ENCODE measurements at regions of chr6 and their contacts with region 1.

Region 1: GRCh38 chr6:44074439-44075136 is 52.7 kb downstream of the MRPL14 start:
- H3K4me3 ChIP-seq: no peak overlapping the region
- H3K27ac ChIP-seq: peak overlapping the region; percentile 19; the same call in 1 of the 2 replicates
- H3K4me1 ChIP-seq: 0 out of 2 replicates have a peak, but pooled peaks cover 3% of the 10 kb centered on the region
- CTCF ChIP-seq: peak; percentile 94

Region 2: GRCh38 chr6:43608310-43608763 is 466.3 kb before region 1 on chr6:
- CTCF ChIA-PET with region 1: interaction called, 63 read pairs
- POLR2A ChIA-PET with region 1: no interaction called
- H3K4me3 ChIP-seq: no peak overlapping the region
- H3K27ac ChIP-seq: no peak overlapping the region
- H3K4me1 ChIP-seq: no peaks in the 10 kb centered on the region
- CTCF ChIP-seq: peak; percentile 83

Region 3: DNA sequence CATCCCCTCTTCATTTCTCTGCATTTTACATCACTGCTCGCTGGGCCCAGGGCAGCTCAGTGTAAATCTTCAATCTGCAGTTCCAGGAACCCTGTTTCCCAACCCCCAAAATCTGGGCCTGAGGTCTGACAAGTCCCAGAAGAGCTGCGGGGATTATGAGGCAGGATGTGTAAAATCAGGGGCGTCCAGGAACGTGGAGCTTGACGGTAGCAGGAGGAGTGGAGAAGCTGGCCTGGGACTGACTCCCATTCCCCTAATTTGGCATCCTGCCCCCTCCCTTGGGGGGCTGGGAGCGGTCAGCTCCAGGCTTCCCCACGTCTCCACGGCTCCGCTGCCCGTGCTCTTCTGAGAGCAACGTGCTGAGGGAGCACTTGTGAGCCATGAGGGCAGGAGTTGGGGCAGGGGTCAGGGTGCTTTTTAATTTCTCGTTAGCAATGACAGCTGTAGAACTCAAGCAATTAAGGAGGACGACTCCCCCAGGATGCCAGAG is 327.9 kb before region 1 on chr6:
- CTCF ChIA-PET with region 1: interaction called, 10 read pairs
- POLR2A ChIA-PET with region 1: interaction called, 3 read pairs
- H3K4me3 ChIP-seq: no peak overlapping the region
- H3K27ac ChIP-seq: no peak overlapping the region
- H3K4me1 ChIP-seq: no peaks in the 10 kb centered on the region
- CTCF ChIP-seq: no peak

Region 4: GRCh38 chr6:43774776-43775534 is 299.6 kb before region 1 on chr6:
- CTCF ChIA-PET with region 1: interaction called, 189 read pairs
- POLR2A ChIA-PET with region 1: interaction called, 36 read pairs
- H3K4me3 ChIP-seq: no peak overlapping the region
- H3K27ac ChIP-seq: no peak overlapping the region
- H3K4me1 ChIP-seq: peaks cover 10% of the 10 kb centered on the region
- CTCF ChIP-seq: peak; percentile 81

Region 5: GRCh38 chr6:44041461-44042260 is 32.9 kb before region 1 on chr6:
- CTCF ChIA-PET with region 1: interaction called, 10 read pairs
- POLR2A ChIA-PET with region 1: interaction called, 6 read pairs
- H3K4me3 ChIP-seq: no peak overlapping the region
- H3K27ac ChIP-seq: no peak overlapping the region; the same call in 1 of the 2 replicates
- H3K4me1 ChIP-seq: peaks cover 7% of the 10 kb centered on the region; the same call in 1 of the 2 replicates
- CTCF ChIP-seq: no peak

Region 6: DNA sequence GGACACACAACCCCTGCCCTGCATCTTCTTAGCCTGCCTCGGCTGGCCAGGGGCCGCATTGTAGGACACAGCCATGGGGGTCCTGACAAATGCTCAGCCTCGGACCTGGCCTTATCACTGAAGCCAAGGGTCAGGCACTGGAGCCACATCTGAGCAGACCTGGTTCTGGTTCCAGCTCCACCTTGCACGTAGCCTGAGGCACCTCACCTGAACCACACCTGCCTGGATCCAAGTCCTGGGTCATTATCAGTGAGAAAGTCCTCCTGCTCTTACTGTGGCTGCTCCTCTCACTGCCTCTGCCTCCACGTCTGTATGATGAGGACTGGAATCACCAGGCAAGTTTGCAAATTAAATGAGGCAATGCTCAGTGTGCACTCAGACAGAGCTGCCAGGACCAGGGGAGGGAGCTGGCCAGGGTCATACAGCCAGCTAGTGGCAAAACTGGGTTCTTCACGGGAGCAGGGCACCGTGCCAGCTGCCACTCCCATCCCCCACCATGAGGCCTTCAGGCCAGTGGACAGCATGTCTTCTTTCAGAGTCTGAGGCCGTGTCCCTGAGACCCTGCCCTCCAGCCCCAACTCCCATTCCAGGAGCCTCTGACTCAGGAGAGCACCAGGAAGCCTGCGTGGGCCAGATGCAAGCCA is 12.5 kb after region 1 on chr6:
- CTCF ChIA-PET with region 1: interaction called, 22 read pairs
- POLR2A ChIA-PET with region 1: no interaction called
- H3K4me3 ChIP-seq: no peak overlapping the region
- H3K27ac ChIP-seq: no peak overlapping the region
- H3K4me1 ChIP-seq: no peaks in the 10 kb centered on the region
- CTCF ChIP-seq: 0 out of 2 replicates have a peak, but pooled peaks have one; percentile 13

Region 7: GRCh38 chr6:44234101-44235025 is 159.8 kb after region 1 on chr6:
- CTCF ChIA-PET with region 1: no interaction called
- POLR2A ChIA-PET with region 1: no interaction called
- H3K4me3 ChIP-seq: no peak overlapping the region
- H3K27ac ChIP-seq: no peak overlapping the region
- H3K4me1 ChIP-seq: peaks cover 4% of the 10 kb centered on the region; the same call in 1 of the 2 replicates
- CTCF ChIP-seq: peak; percentile 69

Region 8: DNA sequence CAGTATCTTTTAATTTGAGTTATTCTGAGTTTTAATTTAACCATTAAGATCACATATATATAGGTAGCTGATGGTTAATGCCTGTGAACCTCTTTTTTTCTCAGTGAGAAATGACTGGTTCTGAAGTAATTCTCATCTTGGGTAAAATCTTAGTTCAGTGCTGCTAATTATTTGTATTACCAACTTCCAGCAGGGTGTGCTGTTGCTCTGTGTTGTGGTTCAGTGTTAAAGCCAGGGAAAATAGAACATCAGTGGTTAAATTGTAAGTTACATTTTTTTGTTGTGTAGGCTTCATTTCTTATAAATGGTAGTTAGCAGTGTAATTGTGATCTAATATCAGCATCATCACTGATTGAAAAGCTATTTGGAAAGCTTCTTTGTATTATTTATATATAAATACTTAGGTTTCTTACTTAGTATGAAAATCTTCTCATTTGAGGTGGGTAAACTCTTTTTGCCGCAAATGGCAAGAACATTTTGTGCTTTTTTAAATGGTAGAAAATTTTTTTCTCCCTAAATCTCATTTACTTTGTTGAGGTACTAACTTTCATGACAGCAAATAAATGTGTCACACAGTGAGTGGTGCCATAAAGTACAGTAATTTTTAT is 356.6 kb after region 1 on chr6:
- CTCF ChIA-PET with region 1: no interaction called
- POLR2A ChIA-PET with region 1: no interaction called
- H3K4me3 ChIP-seq: no peak overlapping the region
- H3K27ac ChIP-seq: no peak overlapping the region
- H3K4me1 ChIP-seq: peaks cover 22% of the 10 kb centered on the region
- CTCF ChIP-seq: peak; percentile 55; the same call in 1 of the 2 replicates